ENCODE measurements at regions of chr11 and their contacts with region 1.

Region 1: GRCh38 chr11:75547580-75548058 is 14.4 kb upstream of the SERPINH1 start:
- DNase-seq: no peak
- H3K4me3 ChIP-seq: no peak overlapping the region
- H3K27ac ChIP-seq: no peak overlapping the region
- H3K4me1 ChIP-seq: no peaks in the 10 kb centered on the region
- H3K27me3 ChIP-seq: no peaks in the 10 kb centered on the region
- CTCF ChIP-seq: peak; percentile 76 to 90

Region 2: GRCh38 chr11:75562048-75562835 is 14.6 kb after region 1 on chr11 and contains the start of gene SERPINH1:
- CTCF ChIA-PET with region 1: interaction called, 4 read pairs
- dilution Hi-C with region 1: no loop called
- in situ Hi-C with region 1: no loop called
- intact Hi-C with region 1: loop called (anchors 2 kb)
- DNase-seq: peak; percentile 73
- H3K4me3 ChIP-seq: peak within 1 kb of the TSS; percentile 60 to 74 (median 66)
- H3K27ac ChIP-seq: peak within 1 kb of the TSS; percentile 75
- H3K4me1 ChIP-seq: peaks cover 51% of the 10 kb centered on the region
- H3K27me3 ChIP-seq: no peaks in the 10 kb centered on the region
- CTCF ChIP-seq: no peak
- total RNA-seq, gene SERPINH1: 32.5 to 519 TPM

Region 3: DNA sequence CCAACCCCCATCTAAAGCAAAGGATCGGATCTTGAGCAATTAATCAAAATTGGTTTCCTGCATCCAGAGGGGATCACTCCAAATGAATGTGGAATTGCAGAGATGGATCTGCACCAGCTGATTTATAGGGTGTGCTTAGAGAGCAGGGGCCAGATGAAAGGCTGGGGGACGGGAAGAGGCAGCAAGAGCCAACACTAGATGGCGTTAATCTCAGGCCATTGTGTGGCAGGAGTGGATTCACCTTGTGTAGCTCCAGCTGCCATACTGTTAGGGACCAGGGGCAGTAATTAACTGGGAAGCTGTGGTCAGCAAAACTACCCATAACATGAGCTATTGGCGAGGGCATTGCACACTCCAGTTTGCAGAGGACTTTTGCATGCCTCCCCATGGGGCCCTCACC is 50.0 kb after region 1 on chr11:
- CTCF ChIA-PET with region 1: interaction called, 4 read pairs
- dilution Hi-C with region 1: no loop called
- in situ Hi-C with region 1: no loop called
- intact Hi-C with region 1: loop called (anchors 1 kb)
- DNase-seq: peak; percentile 24
- H3K4me3 ChIP-seq: no peak overlapping the region
- H3K27ac ChIP-seq: no peak overlapping the region
- H3K4me1 ChIP-seq: peaks cover under 1% of the 10 kb centered on the region
- H3K27me3 ChIP-seq: no peaks in the 10 kb centered on the region
- CTCF ChIP-seq: peak; percentile 70 to 73

Region 4: GRCh38 chr11:75677275-75677674 is 129.7 kb after region 1 on chr11:
- CTCF ChIA-PET with region 1: no interaction called
- dilution Hi-C with region 1: no loop called
- in situ Hi-C with region 1: no loop called
- intact Hi-C with region 1: no loop called
- DNase-seq: no peak
- H3K4me3 ChIP-seq: no peak overlapping the region
- H3K27ac ChIP-seq: no peak overlapping the region
- H3K4me1 ChIP-seq: no peaks in the 10 kb centered on the region
- H3K27me3 ChIP-seq: peaks cover 8% of the 10 kb centered on the region
- CTCF ChIP-seq: no peak

Region 5: DNA sequence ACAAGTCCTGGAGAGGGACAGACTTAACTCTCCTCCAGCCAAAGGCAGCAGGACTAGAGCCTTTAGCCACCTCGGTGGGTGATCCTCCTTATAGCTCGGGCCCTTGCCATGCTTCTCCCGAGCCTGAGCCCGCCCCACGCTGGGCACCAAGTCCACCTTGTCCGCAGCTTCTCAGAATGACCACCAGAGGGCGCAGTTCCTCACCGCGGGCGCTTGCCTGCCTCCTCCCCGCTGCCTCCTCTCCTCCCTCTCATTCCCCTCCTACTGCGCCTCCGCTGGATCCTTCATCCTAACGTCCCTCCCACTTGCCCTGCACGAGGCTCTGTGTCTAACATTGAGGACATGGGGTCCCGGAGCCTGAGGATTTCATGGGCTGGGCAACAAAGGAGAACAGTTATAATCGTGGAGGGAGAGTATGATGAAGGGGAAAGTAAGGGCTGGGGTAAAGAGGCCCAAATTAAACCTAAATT is 158.7 kb after region 1 on chr11:
- CTCF ChIA-PET with region 1: no interaction called
- dilution Hi-C with region 1: no loop called
- in situ Hi-C with region 1: no loop called
- intact Hi-C with region 1: loop called (anchors 1 kb)
- DNase-seq: peak; percentile 55
- H3K4me3 ChIP-seq: no peak overlapping the region
- H3K27ac ChIP-seq: no peak overlapping the region
- H3K4me1 ChIP-seq: no peaks in the 10 kb centered on the region
- H3K27me3 ChIP-seq: no peaks in the 10 kb centered on the region
- CTCF ChIP-seq: peak; percentile 81 to 92

Region 6: DNA sequence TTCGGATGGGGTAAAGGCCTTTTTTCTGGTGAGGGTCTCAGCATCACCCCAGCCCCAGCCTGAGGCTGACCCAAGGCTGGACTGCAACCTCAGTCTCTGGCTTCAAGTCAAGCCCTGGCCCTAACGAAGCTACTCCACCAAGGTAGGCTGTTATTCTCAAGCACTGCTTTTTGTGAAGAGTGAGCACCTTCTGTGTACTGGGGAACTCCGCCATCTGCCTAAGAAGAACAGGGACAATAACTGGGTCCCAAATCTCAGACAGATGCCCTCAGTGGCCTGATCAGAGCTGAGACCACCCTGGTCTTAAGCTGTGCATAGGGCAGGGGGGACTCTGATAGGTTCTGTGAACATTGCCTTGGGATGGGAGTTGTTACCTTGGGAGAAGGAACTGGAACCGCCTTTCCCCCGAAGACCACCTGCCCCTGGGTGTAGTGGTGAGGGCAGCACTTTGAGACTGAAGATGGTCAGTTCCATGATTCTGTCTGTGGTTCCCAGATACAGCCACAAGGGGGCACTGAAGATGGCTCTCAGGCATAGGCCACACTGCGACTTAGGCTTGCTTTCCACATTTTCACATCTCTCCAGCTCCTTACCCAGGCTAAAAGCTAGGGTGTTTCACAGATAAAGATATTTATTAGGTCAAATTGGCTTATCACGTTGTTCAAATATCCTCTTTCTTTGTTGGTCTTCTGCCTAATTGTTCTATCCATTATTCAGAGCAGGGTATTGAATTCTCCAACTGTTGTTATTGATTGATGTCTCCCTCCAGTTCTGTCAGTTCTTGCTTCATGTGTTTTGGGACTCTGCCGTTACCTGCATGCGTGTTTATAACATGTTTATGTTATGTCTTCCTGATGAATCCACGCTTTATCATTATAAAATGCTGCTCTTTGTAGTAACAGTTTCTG is 255.5 kb after region 1 on chr11:
- CTCF ChIA-PET with region 1: no interaction called
- dilution Hi-C with region 1: no loop called
- in situ Hi-C with region 1: no loop called
- intact Hi-C with region 1: loop called (anchors 5 kb)
- DNase-seq: peak; percentile 45
- H3K4me3 ChIP-seq: no peak overlapping the region
- H3K27ac ChIP-seq: no peak overlapping the region
- H3K4me1 ChIP-seq: no peaks in the 10 kb centered on the region
- H3K27me3 ChIP-seq: no peaks in the 10 kb centered on the region
- CTCF ChIP-seq: peak; percentile 90 to 92

Region 7: DNA sequence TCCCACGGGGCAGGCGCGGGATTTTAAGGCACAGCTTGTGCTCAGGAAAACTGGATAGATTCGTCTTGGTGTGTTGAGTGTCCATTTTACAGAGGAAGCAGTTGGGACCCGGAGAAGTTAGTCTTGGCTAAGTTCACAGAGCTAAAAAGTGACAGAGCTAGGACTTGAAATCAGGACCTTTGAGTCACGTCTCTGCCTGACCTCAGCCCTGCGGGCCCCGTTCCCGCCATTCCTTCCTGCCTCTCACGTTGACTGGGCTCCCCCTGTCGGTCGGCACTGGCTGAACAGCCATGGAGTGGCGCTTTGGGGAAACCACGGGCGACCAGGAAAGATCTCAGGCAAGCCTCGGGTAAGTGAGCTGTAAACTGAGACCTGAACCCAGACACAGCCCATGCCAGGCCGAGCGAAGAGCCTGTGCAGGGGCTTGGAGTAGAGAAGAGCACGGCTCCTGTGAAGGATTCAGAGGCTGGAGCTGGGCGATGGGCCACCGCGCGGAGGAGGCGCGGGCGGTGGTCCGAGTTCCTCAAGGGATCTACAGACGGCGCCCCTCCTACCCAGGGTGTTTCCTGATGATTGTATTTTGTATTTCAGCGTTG is 604.6 kb after region 1 on chr11:
- CTCF ChIA-PET with region 1: no interaction called
- dilution Hi-C with region 1: no loop called
- in situ Hi-C with region 1: no loop called
- intact Hi-C with region 1: loop called (anchors 1 kb)
- DNase-seq: peak; percentile 66
- H3K4me3 ChIP-seq: peak overlapping the region in 2 of 3 experiments; percentile 35 to 40
- H3K27ac ChIP-seq: no peak overlapping the region
- H3K4me1 ChIP-seq: peaks cover 3% of the 10 kb centered on the region
- H3K27me3 ChIP-seq: no peaks in the 10 kb centered on the region
- CTCF ChIP-seq: peak; percentile 93 to 95